ENCODE measurements at regions of chr2 and their contacts with region 1.

Region 1: GRCh38 chr2:60707750-60708371 is 48.2 kb upstream of the PAPOLG start:
- DNase-seq: no peak
- H3K4me3 Mint-ChIP-seq: no peak overlapping the region
- H3K27ac Mint-ChIP-seq: no peak overlapping the region
- H3K4me1 Mint-ChIP-seq: no peaks in the 10 kb centered on the region
- H3K27me3 Mint-ChIP-seq: no peaks in the 10 kb centered on the region
- CTCF ChIP-seq: peak; percentile 55

Region 2: DNA sequence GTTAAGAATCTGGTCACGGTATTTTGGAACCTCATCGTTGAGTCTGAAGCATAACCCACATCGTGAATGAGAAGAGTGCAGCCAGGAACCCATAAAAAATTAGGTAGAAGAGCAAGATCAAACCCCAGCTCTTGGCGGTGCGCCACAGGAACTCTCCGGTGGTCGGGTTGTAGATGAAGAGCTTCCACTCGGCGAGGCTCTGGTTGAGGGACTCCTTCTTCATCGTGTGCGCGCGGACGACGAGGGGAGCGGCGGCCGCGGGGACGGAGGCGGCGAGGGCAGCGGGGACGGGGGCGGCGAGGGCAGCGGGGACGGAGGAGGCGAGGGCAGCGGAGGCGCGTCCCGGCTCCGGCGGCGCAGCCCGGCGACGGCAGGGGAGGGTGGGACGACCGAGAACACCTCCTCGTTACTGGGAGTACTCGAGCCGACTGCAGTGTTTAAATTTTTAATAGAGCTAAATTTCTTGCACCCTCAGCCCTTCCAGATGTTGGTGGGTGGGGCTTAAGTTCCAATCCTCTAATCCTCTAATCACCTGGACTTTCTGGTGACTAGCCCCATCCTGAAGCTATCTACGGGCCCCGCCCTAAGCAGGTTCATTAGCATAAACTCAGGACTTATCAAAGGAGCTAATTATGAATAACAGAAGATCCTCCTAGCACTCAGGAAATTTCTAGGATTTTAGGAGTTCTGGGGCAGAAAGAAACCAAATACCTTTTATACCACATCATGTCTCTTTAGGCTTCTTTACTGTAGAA is 27.8 kb after region 1 on chr2:
- CTCF ChIA-PET with region 1: no interaction called
- intact Hi-C with region 1: no loop called
- DNase-seq: peak; percentile 15
- H3K4me3 Mint-ChIP-seq: peak overlapping the region; percentile 67
- H3K27ac Mint-ChIP-seq: no peak overlapping the region
- H3K4me1 Mint-ChIP-seq: peaks cover 8% of the 10 kb centered on the region
- H3K27me3 Mint-ChIP-seq: peaks cover 20% of the 10 kb centered on the region
- CTCF ChIP-seq: no peak

Region 3: GRCh38 chr2:60756191-60757041 is 48.6 kb after region 1 on chr2 and contains the start of gene PAPOLG:
- CTCF ChIA-PET with region 1: interaction called, 4 read pairs
- intact Hi-C with region 1: loop called (anchors 5 kb)
- DNase-seq: peak; percentile 97
- H3K4me3 Mint-ChIP-seq: peak within 1 kb of the TSS; percentile 85
- H3K27ac Mint-ChIP-seq: peak within 1 kb of the TSS; percentile 71
- H3K4me1 Mint-ChIP-seq: peaks cover 12% of the 10 kb centered on the region
- H3K27me3 Mint-ChIP-seq: no peaks in the 10 kb centered on the region
- CTCF ChIP-seq: no peak
- total RNA-seq, gene PAPOLG: 14.4 and 14.7 TPM in 2 replicates

Region 4: DNA sequence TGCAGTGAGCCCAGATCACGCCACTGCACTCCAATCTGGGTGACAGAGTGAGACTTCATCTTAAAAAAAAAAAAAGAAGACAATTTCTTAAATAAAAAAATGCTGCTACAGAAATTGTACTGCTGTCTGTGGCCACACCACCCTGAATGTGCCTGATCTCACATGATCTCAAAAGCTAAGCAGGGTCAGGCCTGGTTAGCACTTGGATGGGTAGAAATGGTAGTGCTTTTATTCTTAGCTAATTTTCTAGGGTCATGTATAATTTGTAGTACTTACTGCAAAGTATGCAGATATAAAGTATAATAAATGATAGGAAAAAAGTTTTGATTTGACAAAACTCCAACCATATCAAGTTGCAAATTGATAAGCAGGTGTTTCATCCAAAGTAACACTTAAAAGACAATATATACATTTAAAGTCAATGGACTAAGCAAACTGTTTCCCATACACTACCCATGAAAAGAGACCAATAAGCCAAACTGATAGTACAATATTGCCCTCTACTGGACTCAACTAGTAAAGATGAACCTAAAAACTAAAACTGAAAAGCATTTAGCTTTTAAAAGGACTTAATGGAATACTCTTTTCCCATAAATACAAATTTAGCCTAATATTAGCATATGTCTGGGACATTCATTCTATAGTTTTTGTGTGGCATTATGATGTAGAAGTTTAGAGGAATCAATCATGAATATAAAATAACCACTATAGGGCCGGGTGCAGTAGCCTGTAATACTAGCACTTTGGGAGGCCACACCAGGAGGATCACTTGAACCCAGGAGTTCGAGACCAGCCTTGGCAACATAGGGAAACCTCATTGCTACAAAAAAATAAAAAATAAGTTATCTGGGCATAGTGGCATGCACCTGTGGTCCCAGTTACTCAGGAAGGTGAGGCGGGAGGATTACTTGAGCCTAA is 291.0 kb after region 1 on chr2:
- CTCF ChIA-PET with region 1: interaction called, 9 read pairs
- intact Hi-C with region 1: loop called (anchors 1 kb)
- DNase-seq: no peak
- H3K4me3 Mint-ChIP-seq: no peak overlapping the region
- H3K27ac Mint-ChIP-seq: no peak overlapping the region
- H3K4me1 Mint-ChIP-seq: no peaks in the 10 kb centered on the region
- H3K27me3 Mint-ChIP-seq: no peaks in the 10 kb centered on the region
- CTCF ChIP-seq: peak; percentile 39